ENCODE measurements at regions of chr4 and their contacts with region 1.

Region 1: GRCh38 chr4:123102897-123103471 is 180.6 kb upstream of the NUDT6 start:
- DNase-seq: peak in 1 of 2 donors; percentile 39
- ATAC-seq: peak in 2 of 3 donors; percentile 58 to 73
- H3K4me3 ChIP-seq: no peak overlapping the region
- H3K4me3 Mint-ChIP-seq: no peak overlapping the region
- H3K27ac ChIP-seq: no peak overlapping the region
- H3K27ac Mint-ChIP-seq: no peak overlapping the region
- H3K4me1 ChIP-seq: no peaks in the 10 kb centered on the region
- H3K4me1 Mint-ChIP-seq: peaks cover 5% of the 10 kb centered on the region in 2 donors
- H3K27me3 ChIP-seq: no peaks in the 10 kb centered on the region
- H3K27me3 Mint-ChIP-seq: no peaks in the 10 kb centered on the region
- CTCF ChIP-seq: peak; percentile 73

Region 2: DNA sequence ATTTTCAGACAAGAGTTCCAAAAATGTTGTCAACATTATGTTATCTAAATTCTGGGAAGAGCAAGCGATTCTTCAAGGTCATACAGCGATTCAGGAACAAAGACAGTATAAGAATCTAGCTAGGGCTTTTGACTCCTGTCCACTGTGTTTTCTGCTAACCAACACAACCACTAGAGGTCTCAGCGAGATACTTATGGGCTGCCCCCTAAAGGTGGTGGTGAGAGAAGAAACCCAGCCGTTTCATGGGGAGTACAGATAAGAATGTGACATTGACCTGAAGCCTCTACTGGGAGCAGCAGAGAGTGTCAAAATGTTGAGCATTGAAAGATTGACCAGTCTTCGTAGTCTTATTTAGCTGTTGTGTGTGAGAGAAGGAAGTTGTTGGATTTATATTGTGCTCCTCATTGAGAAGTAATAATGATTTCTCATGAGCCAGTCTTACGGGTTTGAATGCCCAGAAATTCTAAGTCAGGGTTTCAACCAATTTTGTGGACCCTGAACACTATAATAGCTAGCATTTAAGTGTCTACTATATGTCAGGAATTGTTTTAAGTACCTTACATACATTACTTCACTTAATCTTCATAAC is 461.9 kb after region 1 on chr4:
- intact Hi-C with region 1: loop called (anchors 10 kb)
- DNase-seq: peak; percentile 29 to 78
- ATAC-seq: peak; percentile 92 to 100 (median 100)
- H3K4me3 ChIP-seq: no peak overlapping the region
- H3K4me3 Mint-ChIP-seq: no peak overlapping the region
- H3K27ac ChIP-seq: no peak overlapping the region
- H3K27ac Mint-ChIP-seq: peak overlapping the region in 1 of 2 donors; percentile 47
- H3K4me1 ChIP-seq: no peaks in the 10 kb centered on the region
- H3K4me1 Mint-ChIP-seq: peaks cover 6 to 7% of the 10 kb centered on the region in 2 donors
- H3K27me3 ChIP-seq: no peaks in the 10 kb centered on the region
- H3K27me3 Mint-ChIP-seq: no peaks in the 10 kb centered on the region
- CTCF ChIP-seq: peak; percentile 92

Region 3: DNA sequence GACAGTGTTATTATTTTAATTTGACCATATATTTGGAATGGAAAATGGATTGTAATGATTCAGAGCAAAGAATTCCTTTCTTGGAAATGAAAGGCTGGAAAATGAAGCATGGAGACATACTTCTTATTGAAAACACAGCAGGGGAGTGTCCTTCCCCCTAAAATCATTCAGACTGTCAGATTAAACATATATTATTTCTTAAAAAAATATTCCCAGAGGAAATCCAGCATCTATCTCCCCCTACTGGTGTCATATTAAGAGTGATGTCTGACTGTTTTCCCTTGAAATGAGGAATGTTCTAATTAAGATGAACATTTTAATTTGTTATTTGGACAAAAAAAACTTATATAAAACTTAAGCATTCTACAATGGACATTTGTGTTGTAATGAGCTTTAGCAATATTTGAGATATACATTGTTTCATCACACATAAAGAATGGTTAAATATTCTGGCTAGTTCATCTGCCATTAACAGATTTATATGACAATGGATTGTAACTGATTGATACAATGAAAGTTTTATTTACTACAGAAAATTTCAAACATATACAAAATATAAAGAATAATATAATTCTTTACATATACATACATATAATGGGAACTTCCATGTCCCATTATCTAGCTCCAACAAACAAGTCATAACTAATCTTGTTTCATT is 558.2 kb after region 1 on chr4:
- intact Hi-C with region 1: loop called (anchors 1 kb)
- DNase-seq: peak in 1 of 2 donors; percentile 35
- ATAC-seq: no peak
- H3K4me3 ChIP-seq: no peak overlapping the region
- H3K4me3 Mint-ChIP-seq: no peak overlapping the region
- H3K27ac ChIP-seq: no peak overlapping the region
- H3K27ac Mint-ChIP-seq: no peak overlapping the region
- H3K4me1 ChIP-seq: no peaks in the 10 kb centered on the region
- H3K4me1 Mint-ChIP-seq: peaks cover 0 to 5% of the 10 kb centered on the region in 2 donors
- H3K27me3 ChIP-seq: no peaks in the 10 kb centered on the region
- H3K27me3 Mint-ChIP-seq: peaks cover 4 to 14% of the 10 kb centered on the region in 2 donors
- CTCF ChIP-seq: peak; percentile 65

Region 4: GRCh38 chr4:124262211-124263179 is 1159.5 kb after region 1 on chr4:
- intact Hi-C with region 1: loop called (anchors 5 kb)
- DNase-seq: peak in 1 of 2 donors; percentile 62
- ATAC-seq: peak; percentile 46 to 61 (median 49)
- H3K4me3 ChIP-seq: no peak overlapping the region
- H3K4me3 Mint-ChIP-seq: no peak overlapping the region
- H3K27ac ChIP-seq: no peak overlapping the region
- H3K27ac Mint-ChIP-seq: no peak overlapping the region
- H3K4me1 ChIP-seq: no peaks in the 10 kb centered on the region
- H3K4me1 Mint-ChIP-seq: no peaks in the 10 kb centered on the region
- H3K27me3 ChIP-seq: no peaks in the 10 kb centered on the region
- H3K27me3 Mint-ChIP-seq: no peaks in the 10 kb centered on the region
- CTCF ChIP-seq: peak; percentile 23

Region 5: DNA sequence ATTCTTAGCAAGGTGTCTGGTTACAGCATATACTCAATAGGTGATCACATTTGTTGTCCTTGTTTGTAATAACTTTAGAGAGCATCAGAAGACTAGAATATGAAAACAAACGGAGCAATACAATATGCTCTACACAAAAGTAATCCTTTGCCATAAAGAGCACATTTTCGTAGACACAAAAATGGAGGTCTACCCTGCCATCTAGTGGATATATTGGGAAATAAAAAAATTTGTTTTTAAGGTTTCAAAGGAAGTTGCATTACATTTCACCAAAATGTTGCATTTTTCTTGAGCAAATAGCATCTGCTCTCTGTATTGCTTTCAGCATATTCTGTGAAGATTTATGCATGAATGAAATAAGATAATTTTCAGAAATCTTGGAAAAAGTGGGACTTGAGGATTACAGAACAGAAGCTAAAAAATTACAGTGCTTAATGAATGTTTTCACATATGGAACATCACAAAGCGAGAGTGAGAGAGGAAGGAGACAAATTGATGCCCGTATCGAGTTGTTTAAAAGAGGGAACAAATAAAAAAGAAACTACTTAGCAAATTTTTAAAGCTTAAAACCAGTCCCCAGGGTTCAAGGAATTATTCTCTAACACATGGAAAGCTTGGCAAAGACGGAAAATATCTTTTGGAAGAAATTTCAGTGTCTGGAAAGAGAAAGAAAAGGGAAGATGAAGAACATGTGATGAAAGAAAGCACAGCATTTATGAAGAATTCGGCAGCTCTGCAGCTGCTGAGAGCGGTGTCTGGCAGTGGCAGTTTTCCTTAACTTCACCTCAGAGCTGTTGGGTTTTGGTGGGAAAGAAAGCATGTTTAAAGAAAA is 1219.5 kb after region 1 on chr4:
- intact Hi-C with region 1: loop called (anchors 1 kb)
- DNase-seq: peak in 1 of 2 donors; percentile 35
- ATAC-seq: peak in 1 of 3 donors; percentile 41
- H3K4me3 ChIP-seq: no peak overlapping the region
- H3K4me3 Mint-ChIP-seq: no peak overlapping the region
- H3K27ac ChIP-seq: no peak overlapping the region
- H3K27ac Mint-ChIP-seq: no peak overlapping the region
- H3K4me1 ChIP-seq: no peaks in the 10 kb centered on the region
- H3K4me1 Mint-ChIP-seq: no peaks in the 10 kb centered on the region
- H3K27me3 ChIP-seq: no peaks in the 10 kb centered on the region
- H3K27me3 Mint-ChIP-seq: peaks cover 0 to 6% of the 10 kb centered on the region in 2 donors
- CTCF ChIP-seq: peak; percentile 67

Measured in natural killer cell (primary cell).